ENCODE measurements at regions of chr7 and their contacts with region 1.

Region 1: GRCh38 chr7:97835296-97836138 is 36.7 kb downstream of the ASNS start:
- DNase-seq: peak; percentile 36 to 90 (median 76)

Region 2: GRCh38 chr7:97145068-97145467 is 690.4 kb before region 1 on chr7:
- intact Hi-C with region 1: loop called (anchors 10 kb)
- DNase-seq: no peak